Activated CD4-positive, alpha-beta T cell treated with anti-CD3 and anti-CD28 coated beads for 36 hours (primary cell): ENCODE measurements at regions of chr15 and their contacts with region 1.

Region 1: GRCh38 chr15:89657686-89658200 is 2.5 kb upstream of the KIF7 start:
- DNase-seq: no peak
- ATAC-seq: no peak
- H3K4me3 Mint-ChIP-seq: no peak overlapping the region
- H3K27ac Mint-ChIP-seq: no peak overlapping the region
- H3K4me1 Mint-ChIP-seq: peaks cover 11% of the 10 kb centered on the region
- H3K27me3 Mint-ChIP-seq: peaks cover 37% of the 10 kb centered on the region

Region 2: GRCh38 chr15:89112341-89112971 is 545.3 kb before region 1 on chr15:
- CTCF ChIA-PET with region 1: no interaction called
- POLR2A ChIA-PET with region 1: no interaction called
- intact Hi-C with region 1: no loop called
- DNase-seq: no peak
- ATAC-seq: peak; percentile 30
- H3K4me3 Mint-ChIP-seq: no peak overlapping the region
- H3K27ac Mint-ChIP-seq: no peak overlapping the region
- H3K4me1 Mint-ChIP-seq: peaks cover 20% of the 10 kb centered on the region
- H3K27me3 Mint-ChIP-seq: no peaks in the 10 kb centered on the region

Region 3: GRCh38 chr15:90300988-90301706 is 643.4 kb after region 1 on chr15:
- CTCF ChIA-PET with region 1: no interaction called
- POLR2A ChIA-PET with region 1: interaction called, 12 read pairs
- intact Hi-C with region 1: no loop called
- DNase-seq: peak; percentile 80
- ATAC-seq: peak; percentile 69
- H3K4me3 Mint-ChIP-seq: no peak overlapping the region
- H3K27ac Mint-ChIP-seq: peak overlapping the region; percentile 25
- H3K4me1 Mint-ChIP-seq: peaks cover 31% of the 10 kb centered on the region
- H3K27me3 Mint-ChIP-seq: no peaks in the 10 kb centered on the region

Region 4: DNA sequence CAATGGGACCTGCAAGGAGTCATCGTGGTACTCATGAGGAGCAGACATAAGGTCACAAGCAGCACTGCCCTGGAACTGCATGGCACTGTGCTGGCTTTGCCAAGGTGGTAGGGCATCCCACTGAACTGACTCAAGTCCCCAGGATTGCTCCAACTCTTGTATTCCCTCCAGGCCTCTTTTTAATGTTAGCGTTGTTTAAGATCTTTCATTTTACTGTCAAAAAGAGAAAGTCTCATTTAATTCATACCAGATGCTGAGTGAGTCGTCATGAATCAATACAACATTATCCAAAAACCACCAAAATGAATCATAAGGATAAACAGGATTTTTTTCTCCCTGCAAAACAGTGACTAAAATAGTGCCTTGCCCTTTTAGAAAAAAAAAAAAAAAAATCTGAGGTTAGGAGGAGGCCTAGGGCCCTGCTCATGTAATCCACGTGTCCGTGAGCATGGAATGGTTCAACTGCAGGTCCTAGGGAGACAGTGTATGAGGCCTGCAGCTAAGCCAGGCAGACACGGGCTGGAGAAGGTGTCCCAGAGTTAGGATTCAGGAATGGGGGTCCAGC is 1022.7 kb after region 1 on chr15:
- CTCF ChIA-PET with region 1: no interaction called
- POLR2A ChIA-PET with region 1: no interaction called
- intact Hi-C with region 1: no loop called
- DNase-seq: no peak
- ATAC-seq: peak; percentile 59
- H3K4me3 Mint-ChIP-seq: no peak overlapping the region
- H3K27ac Mint-ChIP-seq: no peak overlapping the region
- H3K4me1 Mint-ChIP-seq: peaks cover 46% of the 10 kb centered on the region
- H3K27me3 Mint-ChIP-seq: peaks cover 5% of the 10 kb centered on the region